ENCODE measurements at regions of chr11 and their contacts with region 1.

Region 1: DNA sequence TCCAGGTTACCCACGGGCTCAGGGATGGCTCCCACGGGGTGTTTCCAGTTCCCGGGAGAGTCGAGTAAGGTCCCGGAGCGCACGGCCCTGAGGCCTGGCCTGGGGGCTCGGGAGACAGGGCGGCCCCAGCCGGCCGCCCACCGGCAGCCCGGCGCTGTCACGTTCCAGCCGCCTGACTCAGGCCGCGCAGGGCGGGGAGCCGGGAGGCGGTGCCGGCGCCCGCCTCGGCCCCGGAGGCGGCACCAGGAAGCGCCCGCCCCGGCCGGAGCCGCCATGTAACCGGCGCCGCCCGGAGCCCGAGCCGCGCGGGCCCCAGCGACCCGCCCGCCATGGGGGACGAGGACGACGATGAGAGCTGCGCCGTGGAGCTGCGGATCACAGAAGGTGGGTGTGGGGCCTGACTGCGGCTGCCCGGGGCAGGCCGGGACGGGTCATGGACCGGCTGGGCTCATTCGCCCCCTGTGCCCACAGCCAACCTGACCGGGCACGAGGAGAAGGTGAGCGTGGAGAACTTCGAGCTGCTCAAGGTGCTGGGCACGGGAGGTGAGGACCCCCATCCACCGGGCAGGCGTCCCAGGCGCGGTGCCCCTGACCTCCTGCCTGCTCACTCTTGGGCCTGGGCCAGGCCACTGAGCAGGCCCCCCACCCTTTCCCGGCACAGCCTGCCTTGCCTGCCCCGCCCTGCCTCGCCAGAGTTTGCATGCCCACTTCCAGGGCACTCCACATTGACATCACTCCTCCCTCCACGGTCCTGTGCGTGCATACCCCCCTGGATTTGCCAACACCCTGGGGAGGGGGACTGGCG is at the start of gene RPS6KA4:
- DNase-seq: peak; percentile 47 to 71
- ATAC-seq: peak; percentile 70 to 80
- H3K4me3 ChIP-seq: peak within 1 kb of the TSS; percentile 73
- H3K27ac ChIP-seq: peak within 1 kb of the TSS; percentile 86 to 98
- H3K4me1 ChIP-seq: peaks cover 50% of the 10 kb centered on the region
- CTCF ChIP-seq: no peak
- EP300 ChIP-seq: no peak
- POLR2A ChIP-seq: peak; percentile 64
- RAD21 ChIP-seq: no peak
- polyA plus RNA-seq, gene RPS6KA4: 19.1 and 21.4 TPM in 2 replicates

Region 2: DNA sequence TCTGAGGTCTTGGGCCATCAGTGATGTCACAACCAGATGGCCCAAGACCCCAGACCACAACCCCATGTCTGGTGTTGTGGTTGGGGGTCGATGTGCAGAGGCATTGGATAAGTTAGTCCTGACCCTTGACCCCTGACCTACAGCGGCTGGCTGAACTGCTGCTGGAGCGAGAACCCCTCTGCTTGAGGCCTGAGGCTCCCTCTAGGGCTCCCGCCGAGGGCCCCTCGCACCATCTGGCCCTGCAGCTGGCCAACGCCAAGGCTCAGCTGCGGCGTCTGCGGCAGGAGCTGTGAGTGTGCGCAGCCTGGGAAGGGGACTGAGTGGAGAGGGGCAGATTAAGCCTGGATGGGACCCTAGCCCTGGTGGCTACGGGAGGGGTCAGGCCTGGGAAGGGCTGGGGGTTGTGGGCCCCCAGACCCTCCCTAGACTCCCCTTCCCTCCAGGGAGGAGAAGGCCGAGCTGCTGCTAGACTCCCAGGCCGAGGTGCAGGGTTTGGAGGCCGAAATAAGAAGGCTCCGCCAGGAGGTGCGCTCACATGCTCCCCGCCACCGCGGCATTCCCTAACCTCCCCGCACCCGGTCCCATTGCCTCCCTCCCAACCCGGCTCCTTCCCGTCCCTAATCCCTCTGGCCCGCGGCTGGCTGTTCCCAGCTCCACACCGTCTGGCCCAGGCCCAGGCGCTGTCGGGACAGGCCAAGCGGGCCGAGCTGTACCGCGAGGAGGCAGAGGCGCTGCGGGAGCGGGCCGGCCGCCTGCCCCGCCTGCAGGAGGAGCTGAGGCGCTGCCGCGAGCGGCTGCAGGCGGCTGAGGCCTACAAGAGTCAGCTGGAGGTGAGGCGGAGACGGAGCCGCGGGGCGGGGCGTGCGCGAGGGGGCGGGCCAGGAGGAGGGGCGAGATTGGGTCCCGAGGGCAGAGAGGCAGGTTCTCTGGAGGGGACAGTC is 17.0 kb before region 1 on chr11:
- CTCF ChIA-PET with region 1: interaction called, 301 read pairs
- POLR2A ChIA-PET with region 1: interaction called, 12 read pairs
- DNase-seq: peak; percentile 91 to 93
- ATAC-seq: peak; percentile 87 to 93
- H3K4me3 ChIP-seq: peak overlapping the region; percentile 38
- H3K27ac ChIP-seq: peak overlapping the region; percentile 88 to 93
- H3K4me1 ChIP-seq: peaks cover 18% of the 10 kb centered on the region
- CTCF ChIP-seq: peak; percentile 43
- EP300 ChIP-seq: no peak
- POLR2A ChIP-seq: peak; percentile 85
- RAD21 ChIP-seq: peak; percentile 27 to 44; a peak in 3 of 5 replicates

Region 3: DNA sequence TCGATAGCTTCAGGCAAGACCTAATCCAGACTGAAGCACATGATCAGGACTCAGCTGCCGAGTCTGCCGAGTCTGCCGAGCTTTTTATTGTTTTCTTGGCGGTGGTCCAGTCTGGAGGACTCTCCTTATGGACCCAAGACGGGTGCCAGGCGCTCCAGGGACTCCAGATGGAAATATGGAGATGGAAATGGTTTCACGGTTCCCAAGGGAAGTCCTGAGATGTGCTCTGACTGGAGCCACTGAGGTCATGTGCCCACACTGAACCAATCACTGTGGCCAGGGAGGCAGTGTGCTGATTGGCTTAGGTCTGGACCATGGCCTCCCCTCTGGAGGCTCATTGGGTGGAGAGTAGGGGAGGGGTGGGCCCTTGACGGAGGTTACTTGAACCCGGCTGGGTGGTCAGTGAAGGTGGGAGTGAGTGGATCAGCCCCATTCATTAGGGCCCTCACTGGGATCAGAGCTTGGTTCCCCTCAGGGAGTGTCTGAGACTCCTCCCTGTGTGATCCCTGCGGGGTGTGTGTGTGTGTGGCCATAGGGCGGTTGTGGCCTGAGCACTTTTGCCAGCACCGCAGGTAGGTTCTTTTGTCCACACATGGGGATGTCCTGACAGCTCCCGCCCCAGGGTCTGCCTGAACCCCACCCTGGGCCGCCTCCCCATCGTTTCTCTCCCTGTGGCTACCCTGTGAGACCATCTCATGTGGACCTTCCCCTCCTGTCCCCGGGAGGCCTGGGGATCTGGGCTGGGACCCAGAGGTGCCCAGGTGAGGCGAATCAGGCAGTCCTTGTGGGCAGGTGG is 13.9 kb after region 1 on chr11:
- CTCF ChIA-PET with region 1: interaction called, 11 read pairs
- POLR2A ChIA-PET with region 1: interaction called, 4 read pairs
- DNase-seq: peak; percentile 88 to 90
- ATAC-seq: peak; percentile 96 to 100
- H3K4me3 ChIP-seq: peak overlapping the region; percentile 44
- H3K27ac ChIP-seq: peak overlapping the region; percentile 59 to 72
- H3K4me1 ChIP-seq: no peaks in the 10 kb centered on the region
- CTCF ChIP-seq: no peak
- EP300 ChIP-seq: no peak
- POLR2A ChIP-seq: peak; percentile 56; the same call in 1 of the 2 replicates
- RAD21 ChIP-seq: no peak

Measured in A549 (cell line).